ENCODE measurements at regions of chr17 and their contacts with region 1.

Region 1: DNA sequence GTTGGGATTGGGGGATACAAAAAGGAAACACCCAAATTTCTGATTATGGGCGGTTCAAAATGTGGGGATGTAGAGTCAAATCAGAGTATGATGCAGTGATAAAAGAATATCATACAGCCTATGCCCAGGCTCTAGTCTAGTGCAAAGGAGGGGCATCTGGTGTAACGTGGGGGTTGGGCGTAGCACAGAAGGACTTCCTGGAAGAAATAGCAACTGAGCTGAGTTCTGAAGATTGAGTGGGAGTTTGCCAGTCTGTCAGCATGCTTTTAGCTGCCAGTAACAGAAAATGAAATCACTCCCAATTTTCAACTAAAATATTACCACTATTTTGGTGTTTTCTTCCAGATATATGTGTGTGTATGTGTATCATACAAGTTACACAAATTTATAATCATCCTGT is 196.9 kb downstream of the SPECC1 start:
- DNase-seq: peak in 1 of 2 donors; percentile 72
- ATAC-seq: no peak
- H3K4me3 ChIP-seq: no peak overlapping the region
- H3K27ac ChIP-seq: peak overlapping the region in 1 of 2 donors; percentile 89
- H3K4me1 ChIP-seq: peaks cover 4 to 10% of the 10 kb centered on the region in 2 donors
- H3K27me3 ChIP-seq: no peaks in the 10 kb centered on the region

Region 2: GRCh38 chr17:20073055-20073979 is 132.8 kb before region 1 on chr17:
- intact Hi-C with region 1: no loop called
- DNase-seq: peak; percentile 83 to 85
- ATAC-seq: peak; percentile 80
- H3K4me3 ChIP-seq: peak overlapping the region; percentile 40 to 62
- H3K27ac ChIP-seq: peak overlapping the region; percentile 47 to 56
- H3K4me1 ChIP-seq: peaks cover 3 to 7% of the 10 kb centered on the region in 2 donors
- H3K27me3 ChIP-seq: no peaks in the 10 kb centered on the region

Region 3: GRCh38 chr17:20155258-20156195 is 50.5 kb before region 1 on chr17:
- intact Hi-C with region 1: loop called in 1 of 2 experiments (anchors 5 kb)
- DNase-seq: peak; percentile 99
- ATAC-seq: peak; percentile 97
- H3K4me3 ChIP-seq: peak overlapping the region; percentile 53 to 74
- H3K27ac ChIP-seq: peak overlapping the region in 1 of 2 donors; percentile 39
- H3K4me1 ChIP-seq: peaks cover 4 to 6% of the 10 kb centered on the region in 2 donors
- H3K27me3 ChIP-seq: no peaks in the 10 kb centered on the region

Measured in aorta (tissue), 5 donors.